ENCODE measurements at regions of chr1 and their contacts with region 1.

Region 1: GRCh38 chr1:75796376-75797272 is at the start of gene MSH4:
- DNase-seq: peak in 1 of 2 experiments; percentile 49
- H3K4me3 ChIP-seq: no peak within 1 kb of the TSS
- H3K4me1 ChIP-seq: peaks cover 10% of the 10 kb centered on the region
- H3K27me3 ChIP-seq: no peaks in the 10 kb centered on the region; the same call in 1 of the 2 replicates

Region 2: DNA sequence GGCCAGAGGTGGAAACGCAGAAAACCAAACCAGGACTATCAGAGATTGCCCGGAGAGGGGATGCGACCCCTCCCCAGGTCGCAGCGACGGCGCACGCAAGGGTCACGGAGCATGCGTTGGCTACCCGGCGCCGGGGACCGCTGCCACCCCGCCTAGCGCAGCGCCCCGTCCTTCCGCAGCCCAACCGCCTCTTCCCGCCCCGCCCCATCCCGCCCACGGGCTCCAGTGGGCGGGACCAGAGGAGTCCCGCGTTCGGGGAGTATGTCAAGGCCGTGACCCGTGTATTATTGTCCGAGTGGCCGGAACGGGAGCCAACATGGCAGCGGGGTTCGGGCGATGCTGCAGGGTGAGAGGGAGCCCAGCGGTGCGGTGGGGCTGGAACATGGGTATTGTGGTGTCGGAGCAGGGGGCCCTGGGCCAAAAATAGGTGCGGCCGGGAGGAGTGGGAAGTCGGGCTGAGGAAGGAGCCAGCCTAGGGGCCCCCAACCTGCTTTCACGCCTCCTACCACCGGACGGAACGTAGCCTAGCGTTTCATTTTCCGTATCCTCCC is 72.1 kb before region 1 on chr1 and contains the start of gene ACADM:
- in situ Hi-C with region 1: loop called (anchors 10 kb)
- DNase-seq: peak; percentile 77 to 87
- H3K4me3 ChIP-seq: peak within 1 kb of the TSS; percentile 79
- H3K4me1 ChIP-seq: peaks cover 5% of the 10 kb centered on the region; the same call in 1 of the 2 replicates
- H3K27me3 ChIP-seq: no peaks in the 10 kb centered on the region

Measured in HAP-1 (cell line).